Right cardiac atrium (tissue), 5 donors: ENCODE measurements at regions of chr5 and their contacts with region 1.

Region 1: DNA sequence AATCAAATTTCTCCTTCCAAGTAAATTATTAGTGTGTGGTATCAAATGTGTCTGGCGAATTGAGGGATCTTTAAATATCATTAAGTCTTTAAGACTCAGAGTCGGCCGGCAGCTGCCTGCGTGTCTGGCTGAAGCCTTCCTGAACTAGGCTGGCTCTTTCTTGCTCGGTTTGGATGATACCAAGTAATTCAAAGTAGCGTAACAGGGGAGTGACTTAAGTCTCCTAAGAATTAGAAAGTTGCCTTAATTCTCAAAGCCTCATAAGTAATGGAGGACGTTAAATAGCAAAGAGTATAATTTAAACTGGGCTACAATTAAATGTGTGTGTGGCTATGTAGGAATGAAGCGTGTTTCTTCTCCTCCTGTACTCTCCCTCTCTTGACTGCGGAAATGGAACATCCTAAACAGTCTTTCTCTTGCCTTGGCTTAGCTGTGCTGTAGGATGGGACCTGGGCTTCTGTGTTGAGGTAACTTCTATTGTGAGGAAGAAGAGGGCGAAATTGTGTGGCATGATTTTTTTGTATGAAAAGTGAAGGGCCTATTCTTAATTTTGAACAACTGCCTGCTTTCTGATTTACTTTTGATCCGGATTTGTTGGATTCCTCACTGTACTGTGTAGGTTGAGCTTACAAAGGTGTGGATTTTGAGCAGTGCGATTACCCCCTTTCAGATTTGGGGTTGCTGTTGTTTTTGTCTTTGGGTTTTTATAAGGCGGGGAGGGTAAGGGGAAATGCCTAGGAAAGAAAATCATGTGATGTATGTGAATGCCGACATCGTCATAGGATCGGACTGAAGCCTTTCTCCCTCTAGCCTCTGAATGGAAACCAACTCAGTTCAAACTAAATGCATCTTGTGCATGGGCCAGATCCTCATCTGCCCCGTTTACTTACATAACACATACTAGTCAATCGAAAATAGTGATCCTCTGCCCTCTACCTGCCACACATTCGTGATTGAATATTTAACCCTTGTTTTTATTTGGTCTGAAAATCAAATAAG is 29.9 kb downstream of the CPEB4 start:
- DNase-seq: peak; percentile 42 to 79 (median 74)
- ATAC-seq: peak; percentile 87 to 88
- H3K4me3 ChIP-seq: peak overlapping the region; percentile 73
- H3K27ac ChIP-seq: peak overlapping the region; percentile 78
- H3K4me1 ChIP-seq: peaks cover 9% of the 10 kb centered on the region
- H3K27me3 ChIP-seq: no peaks in the 10 kb centered on the region

Region 2: GRCh38 chr5:173963867-173964441 is 45.9 kb after region 1 on chr5:
- intact Hi-C with region 1: loop called in 1 of 4 experiments (anchors 10 kb)
- DNase-seq: no peak
- ATAC-seq: peak; percentile 9 to 29
- H3K4me3 ChIP-seq: no peak overlapping the region
- H3K27ac ChIP-seq: peak overlapping the region; percentile 48
- H3K4me1 ChIP-seq: no peaks in the 10 kb centered on the region
- H3K27me3 ChIP-seq: no peaks in the 10 kb centered on the region

Region 3: DNA sequence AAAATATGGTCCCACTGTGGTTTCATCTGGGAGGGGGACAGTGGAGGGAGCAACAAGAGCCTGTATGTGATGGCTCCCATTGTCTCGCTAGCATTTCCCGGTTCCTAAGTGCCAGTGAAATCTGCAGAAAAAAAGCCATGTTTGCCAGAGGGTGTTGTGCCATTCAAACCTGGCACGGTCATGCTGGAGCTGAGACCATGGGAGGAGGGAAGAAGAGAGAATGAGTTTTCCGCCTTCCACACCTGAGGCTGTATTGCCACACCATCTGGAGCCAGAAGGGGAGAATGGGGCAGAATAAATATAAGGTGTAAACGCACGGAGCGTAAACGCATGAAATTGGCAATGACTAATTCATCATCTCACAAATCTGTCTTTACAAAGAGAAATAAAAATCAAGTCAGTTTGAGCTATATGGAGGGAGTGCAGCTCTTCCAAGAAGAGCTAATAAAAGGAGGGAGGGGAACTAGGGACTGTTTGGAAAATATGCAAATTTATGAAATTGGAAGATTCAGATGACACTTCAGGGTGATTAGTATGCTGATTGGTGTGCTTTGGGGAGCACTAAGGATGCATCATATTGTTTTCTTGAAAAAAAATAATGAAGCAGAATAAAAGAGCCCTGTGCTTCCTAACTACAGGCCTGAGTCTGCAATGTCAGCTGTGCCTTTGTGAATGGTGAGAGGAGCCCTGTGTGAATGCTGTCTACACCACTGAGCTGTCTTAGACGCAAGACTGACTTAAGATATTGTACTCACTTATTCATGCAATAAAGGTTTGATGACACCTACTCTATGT is 365.3 kb after region 1 on chr5:
- intact Hi-C with region 1: no loop called
- DNase-seq: no peak
- ATAC-seq: no peak
- H3K4me3 ChIP-seq: no peak overlapping the region
- H3K27ac ChIP-seq: no peak overlapping the region
- H3K4me1 ChIP-seq: no peaks in the 10 kb centered on the region
- H3K27me3 ChIP-seq: no peaks in the 10 kb centered on the region

Region 4: GRCh38 chr5:174295702-174296436 is 377.8 kb after region 1 on chr5:
- intact Hi-C with region 1: no loop called
- DNase-seq: no peak
- ATAC-seq: no peak
- H3K4me3 ChIP-seq: no peak overlapping the region
- H3K27ac ChIP-seq: no peak overlapping the region
- H3K4me1 ChIP-seq: peaks cover 2% of the 10 kb centered on the region
- H3K27me3 ChIP-seq: no peaks in the 10 kb centered on the region